ENCODE measurements at regions of chr4 and their contacts with region 1.

Region 1: GRCh38 chr4:45453258-45453853 is 670.5 kb downstream of the GABRG1 start:
- DNase-seq: no peak
- ATAC-seq: peak; percentile 69
- H3K4me3 ChIP-seq: no peak overlapping the region
- H3K4me1 ChIP-seq: no peaks in the 10 kb centered on the region
- CTCF ChIP-seq: no peak

Region 2: GRCh38 chr4:46270986-46271596 is 817.7 kb after region 1 on chr4:
- intact Hi-C with region 1: loop called in 1 of 2 experiments (anchors 10 kb)
- DNase-seq: no peak
- ATAC-seq: peak; percentile 32
- H3K4me3 ChIP-seq: no peak overlapping the region
- H3K4me1 ChIP-seq: no peaks in the 10 kb centered on the region
- CTCF ChIP-seq: no peak

Measured in mucosa of descending colon (tissue), 3 donors.